ENCODE measurements at regions of chr5 and their contacts with region 1.

Region 1: DNA sequence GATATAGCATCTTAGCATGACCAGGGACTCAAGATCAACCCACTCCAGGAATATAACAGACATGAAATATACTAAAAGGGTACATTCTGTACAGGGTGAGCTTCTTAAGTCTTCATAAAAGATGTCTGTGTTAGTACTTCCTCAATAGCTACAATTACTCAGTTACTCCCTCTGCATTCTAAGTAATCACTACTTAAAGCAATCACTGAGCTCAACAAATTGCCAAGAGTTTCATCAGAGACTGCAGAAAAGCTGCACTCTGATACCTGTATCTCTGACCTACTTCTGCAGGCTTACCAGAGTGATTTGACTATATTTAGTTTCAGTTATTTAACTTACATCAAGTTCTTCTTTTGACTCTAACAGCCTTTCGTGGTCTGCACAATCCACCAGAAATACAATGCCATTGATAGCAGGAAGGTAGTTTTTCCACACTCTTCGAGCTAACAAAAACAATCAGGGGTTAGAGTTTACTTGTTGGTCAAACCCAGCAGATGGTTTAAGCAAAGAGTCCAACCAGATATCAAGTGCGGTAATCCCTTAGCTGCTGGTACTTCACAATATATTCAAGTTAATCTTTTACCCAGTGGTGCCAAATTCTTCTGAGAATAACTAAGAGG is 23.3 kb downstream of the SAR1B start:
- DNase-seq: no peak
- H3K4me3 Mint-ChIP-seq: peak overlapping the region; percentile 21
- H3K27ac Mint-ChIP-seq: peak overlapping the region; percentile 92
- H3K4me1 Mint-ChIP-seq: peaks cover 52% of the 10 kb centered on the region
- H3K27me3 Mint-ChIP-seq: no peaks in the 10 kb centered on the region

Region 2: GRCh38 chr5:134503088-134503946 is 106.0 kb before region 1 on chr5:
- CTCF ChIA-PET with region 1: no interaction called
- POLR2A ChIA-PET with region 1: no interaction called
- DNase-seq: peak; percentile 85
- H3K4me3 Mint-ChIP-seq: peak overlapping the region; percentile 43
- H3K27ac Mint-ChIP-seq: peak overlapping the region; percentile 96
- H3K4me1 Mint-ChIP-seq: peaks cover 50% of the 10 kb centered on the region
- H3K27me3 Mint-ChIP-seq: no peaks in the 10 kb centered on the region

Region 3: GRCh38 chr5:134540747-134541733 is 68.3 kb before region 1 on chr5:
- CTCF ChIA-PET with region 1: no interaction called
- POLR2A ChIA-PET with region 1: no interaction called
- DNase-seq: no peak
- H3K4me3 Mint-ChIP-seq: no peak overlapping the region
- H3K27ac Mint-ChIP-seq: no peak overlapping the region
- H3K4me1 Mint-ChIP-seq: peaks cover 47% of the 10 kb centered on the region
- H3K27me3 Mint-ChIP-seq: no peaks in the 10 kb centered on the region

Region 4: GRCh38 chr5:134637161-134637582 is 27.8 kb after region 1 on chr5:
- CTCF ChIA-PET with region 1: interaction called, 5 read pairs
- POLR2A ChIA-PET with region 1: interaction called, 11 read pairs
- DNase-seq: no peak
- H3K4me3 Mint-ChIP-seq: no peak overlapping the region
- H3K27ac Mint-ChIP-seq: no peak overlapping the region
- H3K4me1 Mint-ChIP-seq: peaks cover 14% of the 10 kb centered on the region
- H3K27me3 Mint-ChIP-seq: no peaks in the 10 kb centered on the region

Region 5: GRCh38 chr5:134935711-134936602 is 326.6 kb after region 1 on chr5:
- CTCF ChIA-PET with region 1: no interaction called
- POLR2A ChIA-PET with region 1: no interaction called
- DNase-seq: no peak
- H3K4me3 Mint-ChIP-seq: no peak overlapping the region
- H3K27ac Mint-ChIP-seq: no peak overlapping the region
- H3K4me1 Mint-ChIP-seq: no peaks in the 10 kb centered on the region
- H3K27me3 Mint-ChIP-seq: no peaks in the 10 kb centered on the region